Activated naive CD4-positive, alpha-beta T cell treated with anti-CD3 and anti-CD28 coated beads for 36 hours (primary cell): ENCODE measurements at regions of chr2 and their contacts with region 1.

Region 1: DNA sequence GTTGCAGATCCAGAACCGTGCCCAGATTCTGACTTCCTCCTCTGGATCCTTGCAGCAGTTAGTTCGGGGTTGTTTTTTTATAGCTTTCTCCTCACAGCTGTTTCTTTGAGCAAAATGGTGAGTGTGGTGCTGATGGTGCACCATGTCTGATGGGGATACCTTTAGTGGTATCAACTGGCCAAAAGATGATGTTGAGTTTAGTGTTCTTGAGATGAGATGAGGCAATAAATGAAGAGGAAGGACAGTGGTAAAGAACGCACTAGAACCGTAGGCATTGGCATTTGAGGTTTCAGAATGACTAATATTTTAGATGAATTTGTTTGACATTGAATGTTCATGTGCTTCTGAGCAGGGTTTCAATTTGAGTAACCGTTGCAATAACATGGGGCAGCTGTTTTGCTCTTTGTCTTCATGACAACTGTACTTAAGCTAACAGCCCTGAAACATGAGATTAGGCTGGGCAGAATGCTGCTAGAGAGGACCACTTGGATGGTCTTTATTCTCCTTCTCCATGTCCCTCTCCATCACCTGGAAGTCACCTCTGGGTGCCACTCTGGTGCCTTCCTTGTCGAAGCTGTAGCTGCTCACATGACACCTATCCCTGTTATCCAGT is 3.9 kb downstream of the CTLA4 start:
- DNase-seq: peak; percentile 69
- H3K4me3 Mint-ChIP-seq: peak overlapping the region; percentile 92
- H3K27ac Mint-ChIP-seq: peak overlapping the region; percentile 99
- H3K4me1 Mint-ChIP-seq: peaks cover 55% of the 10 kb centered on the region
- H3K27me3 Mint-ChIP-seq: no peaks in the 10 kb centered on the region

Region 2: DNA sequence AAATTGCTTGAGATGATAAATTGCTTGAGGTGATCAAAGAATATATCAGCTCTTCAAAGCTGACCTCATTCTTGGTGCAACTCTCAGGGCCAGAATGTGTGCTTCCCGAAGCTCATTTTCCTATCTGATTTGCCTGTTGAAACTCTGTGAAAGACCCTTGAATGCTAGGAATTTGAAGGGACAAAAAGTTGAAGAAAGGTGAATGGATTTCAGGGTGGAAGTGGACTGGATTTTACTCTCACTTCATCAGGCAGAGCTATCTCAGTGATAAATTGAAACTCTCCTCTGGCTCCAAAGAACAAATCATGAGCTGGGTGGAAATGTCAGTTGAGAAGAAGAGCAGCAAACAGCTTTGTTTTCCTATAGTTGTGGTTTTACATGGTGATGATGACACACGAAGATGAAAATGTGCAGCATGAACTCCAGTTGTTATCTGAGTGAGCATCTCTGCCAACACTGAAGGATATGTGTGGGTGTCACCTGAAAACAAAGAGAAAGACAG is 130.6 kb before region 1 on chr2:
- CTCF ChIA-PET with region 1: interaction called, 3 read pairs
- intact Hi-C with region 1: loop called (anchors 2 kb)
- DNase-seq: peak; percentile 69
- H3K4me3 Mint-ChIP-seq: peak overlapping the region; percentile 54
- H3K27ac Mint-ChIP-seq: peak overlapping the region; percentile 97
- H3K4me1 Mint-ChIP-seq: peaks cover 88% of the 10 kb centered on the region
- H3K27me3 Mint-ChIP-seq: no peaks in the 10 kb centered on the region

Region 3: DNA sequence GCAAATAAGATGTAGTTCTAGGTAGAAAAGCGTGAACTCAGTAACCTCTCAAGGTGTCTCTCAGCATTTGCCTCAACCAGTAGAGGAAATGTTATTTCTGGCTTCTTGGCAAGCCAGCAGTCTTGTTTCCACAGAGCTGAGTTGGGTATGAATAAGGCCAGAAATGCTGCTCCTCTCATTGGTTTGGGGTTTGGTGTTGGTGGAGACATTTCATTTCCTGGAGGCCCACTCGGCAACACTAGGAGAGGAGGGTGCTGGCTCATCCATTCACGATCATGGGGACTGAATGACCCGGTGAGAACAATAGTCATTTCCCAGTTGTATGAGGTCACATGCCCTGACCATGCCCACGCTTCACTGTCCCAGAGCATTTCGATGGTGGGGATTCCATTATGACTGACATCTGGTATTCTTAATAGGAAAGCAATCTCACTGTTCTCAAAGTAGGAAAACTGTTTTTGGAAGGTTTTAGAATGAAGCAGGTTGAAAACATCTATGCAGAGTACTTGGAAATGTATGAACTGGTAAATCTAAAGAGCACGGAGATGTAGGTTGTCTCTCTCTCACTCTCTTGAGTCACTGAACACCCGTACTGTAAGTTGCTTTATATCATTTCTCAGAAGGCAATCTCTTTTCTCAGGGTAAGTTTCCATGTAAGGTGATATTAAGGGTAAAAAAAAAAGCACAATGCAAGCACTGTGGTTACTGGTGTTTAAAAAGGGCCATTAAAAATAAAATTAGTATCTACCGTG is 41.0 kb before region 1 on chr2:
- CTCF ChIA-PET with region 1: no interaction called
- intact Hi-C with region 1: loop called (anchors 1 kb)
- DNase-seq: peak; percentile 74
- H3K4me3 Mint-ChIP-seq: peak overlapping the region; percentile 46
- H3K27ac Mint-ChIP-seq: peak overlapping the region; percentile 94
- H3K4me1 Mint-ChIP-seq: peaks cover 20% of the 10 kb centered on the region
- H3K27me3 Mint-ChIP-seq: no peaks in the 10 kb centered on the region

Region 4: DNA sequence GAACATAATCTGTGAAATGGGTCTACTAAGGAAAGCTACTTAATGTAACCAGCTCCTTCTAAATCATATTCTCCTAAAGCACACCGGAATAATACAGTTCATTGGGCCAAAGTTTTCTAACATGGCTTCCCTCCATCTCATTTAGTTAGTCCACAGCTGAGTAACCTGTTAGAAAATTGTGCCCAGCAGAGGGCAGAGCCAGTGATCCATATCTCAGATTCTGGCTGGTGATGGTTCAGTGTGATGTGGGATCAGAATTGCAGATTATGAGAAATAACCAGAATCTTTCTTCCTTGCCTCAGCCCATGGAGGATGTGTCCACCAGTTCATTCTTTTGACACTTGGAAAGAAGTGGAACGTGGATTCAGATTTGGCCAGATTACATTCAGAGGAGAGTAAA is 13.3 kb before region 1 on chr2:
- CTCF ChIA-PET with region 1: interaction called, 22 read pairs
- intact Hi-C with region 1: loop called (anchors 1 kb)
- DNase-seq: peak; percentile 65
- H3K4me3 Mint-ChIP-seq: no peak overlapping the region
- H3K27ac Mint-ChIP-seq: peak overlapping the region; percentile 60
- H3K4me1 Mint-ChIP-seq: peaks cover 85% of the 10 kb centered on the region
- H3K27me3 Mint-ChIP-seq: no peaks in the 10 kb centered on the region

Region 5: DNA sequence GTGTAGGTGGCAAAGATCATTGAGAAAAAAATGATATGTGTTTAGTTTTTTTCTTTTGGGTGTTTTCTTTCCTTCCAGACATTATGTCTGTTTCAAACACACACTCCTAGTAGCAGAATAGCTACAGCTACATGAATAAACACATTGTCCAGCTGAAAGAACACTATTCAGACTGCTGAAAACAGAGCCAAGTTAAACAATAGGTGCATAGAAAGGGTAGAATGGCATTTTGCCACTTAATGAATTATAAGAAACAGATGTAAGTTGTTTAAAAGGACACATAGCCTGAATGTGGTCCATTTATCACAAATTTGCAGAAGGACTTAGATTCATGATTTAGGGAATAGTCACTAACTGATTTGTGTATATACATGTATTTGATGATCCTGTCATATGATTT is 16.2 kb after region 1 on chr2:
- CTCF ChIA-PET with region 1: interaction called, 6 read pairs
- intact Hi-C with region 1: loop called (anchors 1 kb)
- DNase-seq: no peak
- H3K4me3 Mint-ChIP-seq: no peak overlapping the region
- H3K27ac Mint-ChIP-seq: no peak overlapping the region
- H3K4me1 Mint-ChIP-seq: peaks cover 54% of the 10 kb centered on the region
- H3K27me3 Mint-ChIP-seq: no peaks in the 10 kb centered on the region

Region 6: GRCh38 chr2:204005940-204006721 is 134.7 kb after region 1 on chr2:
- CTCF ChIA-PET with region 1: no interaction called
- intact Hi-C with region 1: loop called (anchors 2 kb)
- DNase-seq: peak; percentile 40
- H3K4me3 Mint-ChIP-seq: no peak overlapping the region
- H3K27ac Mint-ChIP-seq: peak overlapping the region; percentile 96
- H3K4me1 Mint-ChIP-seq: peaks cover 95% of the 10 kb centered on the region
- H3K27me3 Mint-ChIP-seq: no peaks in the 10 kb centered on the region